Mammary epithelial cell (primary cell): ENCODE measurements at regions of chr19 and their contacts with region 1.

Region 1: DNA sequence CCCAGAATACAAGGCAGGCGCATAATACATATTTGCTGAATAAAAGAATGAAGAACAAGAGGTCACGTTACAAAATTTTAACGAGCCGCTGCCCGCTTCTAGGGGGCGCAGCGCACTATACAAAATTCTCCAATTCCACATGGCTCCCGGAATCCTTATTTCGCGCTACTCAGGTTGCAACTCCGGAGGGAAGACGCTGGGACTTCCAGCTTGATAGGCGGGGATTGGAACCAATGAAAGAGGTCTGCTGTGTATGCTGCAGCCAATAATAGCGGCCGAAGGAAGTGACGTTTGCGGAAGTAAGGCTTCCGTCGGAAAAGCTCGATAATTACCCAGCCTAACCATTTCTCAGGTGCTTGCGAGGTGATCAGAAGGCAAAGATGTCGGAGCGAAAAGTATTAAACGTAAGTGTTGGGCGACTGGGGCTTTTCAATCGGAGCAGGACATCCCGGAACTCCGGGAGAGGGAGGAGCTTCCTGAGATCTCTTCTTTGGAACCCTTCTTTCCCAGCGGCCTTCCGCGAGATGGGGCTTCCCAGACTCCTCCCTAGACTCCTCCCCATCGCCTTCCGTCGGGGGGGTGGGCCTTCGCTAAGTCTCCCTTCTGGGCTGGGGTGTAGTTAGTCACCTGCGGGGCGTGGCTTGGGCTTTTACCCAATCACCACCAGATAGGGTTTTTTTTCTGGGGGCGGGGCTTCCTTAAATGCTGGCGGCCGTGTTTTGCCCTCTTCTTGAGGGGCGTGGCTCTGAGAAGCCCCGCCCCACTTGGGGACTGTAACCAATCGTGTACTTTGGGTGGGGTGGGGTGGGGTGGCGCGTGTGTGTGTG is at the start of gene YJU2:
- DNase-seq: peak; percentile 98
- H3K4me3 ChIP-seq: peak within 1 kb of the TSS; percentile 67 to 76 (median 74)
- H3K27ac ChIP-seq: peak within 1 kb of the TSS; percentile 98
- H3K4me1 ChIP-seq: no peaks in the 10 kb centered on the region
- H3K27me3 ChIP-seq: no peaks in the 10 kb centered on the region
- CTCF ChIP-seq: peak; percentile 35 to 48
- total RNA-seq, gene YJU2: 14.4 to 15.0 TPM

Region 2: GRCh38 chr19:4224470-4224869 is 22.5 kb before region 1 on chr19:
- CTCF ChIA-PET with region 1: no interaction called
- dilution Hi-C with region 1: no loop called
- in situ Hi-C with region 1: no loop called
- intact Hi-C with region 1: no loop called
- DNase-seq: no peak
- H3K4me3 ChIP-seq: no peak overlapping the region
- H3K27ac ChIP-seq: no peak overlapping the region
- H3K4me1 ChIP-seq: peaks cover 7% of the 10 kb centered on the region
- H3K27me3 ChIP-seq: no peaks in the 10 kb centered on the region
- CTCF ChIP-seq: no peak

Region 3: GRCh38 chr19:4400135-4400936 is 153.4 kb after region 1 on chr19 and contains the start of gene SH3GL1:
- CTCF ChIA-PET with region 1: no interaction called
- dilution Hi-C with region 1: no loop called
- in situ Hi-C with region 1: no loop called
- intact Hi-C with region 1: loop called (anchors 5 kb)
- DNase-seq: peak; percentile 75
- H3K4me3 ChIP-seq: peak within 1 kb of the TSS; percentile 75 to 96 (median 87)
- H3K27ac ChIP-seq: peak within 1 kb of the TSS; percentile 95
- H3K4me1 ChIP-seq: peaks cover 19% of the 10 kb centered on the region
- H3K27me3 ChIP-seq: no peaks in the 10 kb centered on the region
- CTCF ChIP-seq: peak; percentile 91 to 98
- total RNA-seq, gene SH3GL1: 80.5 to 149 TPM

Region 4: DNA sequence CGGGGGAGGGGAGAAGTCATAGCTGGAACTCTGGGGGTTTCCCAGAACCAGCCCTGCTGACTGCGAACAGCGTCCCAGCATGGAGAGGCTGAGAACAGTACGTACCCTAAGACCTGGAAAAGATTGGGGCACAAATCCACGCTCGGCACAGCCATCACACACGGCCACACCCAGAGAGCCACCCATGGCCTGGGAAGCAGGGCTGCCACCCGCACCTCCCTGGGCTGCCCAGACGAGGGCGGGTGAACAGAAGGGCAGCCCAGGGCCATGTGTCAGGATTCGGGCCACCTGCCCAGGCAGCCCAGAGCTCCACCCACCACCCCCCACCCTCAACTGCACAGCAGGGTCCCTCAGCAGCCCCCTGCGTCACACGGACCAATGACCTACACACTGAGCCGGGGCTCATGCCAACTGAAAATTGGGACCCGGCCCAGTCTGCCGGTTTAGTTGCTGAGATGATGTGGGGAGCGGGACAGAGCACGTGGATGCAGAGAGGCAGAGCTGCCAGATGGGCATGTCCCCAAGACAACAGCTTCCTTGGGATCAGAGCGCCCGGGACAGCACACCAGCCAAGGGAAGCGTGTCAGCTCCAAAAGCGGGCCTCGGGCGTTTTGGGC is 202.2 kb after region 1 on chr19:
- CTCF ChIA-PET with region 1: no interaction called
- dilution Hi-C with region 1: loop called (anchors 10 kb)
- in situ Hi-C with region 1: no loop called
- intact Hi-C with region 1: no loop called
- DNase-seq: no peak
- H3K4me3 ChIP-seq: no peak overlapping the region
- H3K27ac ChIP-seq: no peak overlapping the region
- H3K4me1 ChIP-seq: no peaks in the 10 kb centered on the region
- H3K27me3 ChIP-seq: no peaks in the 10 kb centered on the region
- CTCF ChIP-seq: no peak